Endothelial cell of umbilical vein (primary cell): ENCODE measurements at regions of chr13 and their contacts with region 1.

Region 1: DNA sequence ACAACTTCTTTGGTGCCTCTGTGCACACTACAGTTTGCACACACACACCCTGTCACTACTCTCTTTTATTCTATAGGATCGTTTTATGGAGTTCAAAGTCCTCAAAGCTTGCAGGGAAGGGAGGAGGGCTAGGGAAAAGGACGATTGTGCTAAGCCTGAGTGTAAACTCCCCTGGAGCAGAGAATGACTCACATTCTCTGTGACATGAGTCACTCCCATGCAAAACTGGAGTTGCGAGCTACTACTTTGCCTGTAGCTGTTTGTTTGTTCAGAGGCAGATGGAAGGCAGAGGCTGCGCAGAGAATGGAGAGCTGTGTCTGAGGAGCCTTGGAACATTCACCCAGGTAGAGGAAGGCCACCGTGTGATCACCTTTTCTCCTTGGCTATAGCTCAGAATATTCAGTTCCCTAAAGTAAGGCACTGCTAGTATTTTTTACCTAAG is 80.5 kb upstream of the MBNL2 start:
- DNase-seq: peak; percentile 87
- H3K4me3 ChIP-seq: no peak overlapping the region
- H3K27ac ChIP-seq: no peak overlapping the region
- H3K4me1 ChIP-seq: peaks cover 19% of the 10 kb centered on the region
- H3K27me3 ChIP-seq: no peaks in the 10 kb centered on the region
- CTCF ChIP-seq: no peak
- POLR2A ChIP-seq: no peak

Region 2: DNA sequence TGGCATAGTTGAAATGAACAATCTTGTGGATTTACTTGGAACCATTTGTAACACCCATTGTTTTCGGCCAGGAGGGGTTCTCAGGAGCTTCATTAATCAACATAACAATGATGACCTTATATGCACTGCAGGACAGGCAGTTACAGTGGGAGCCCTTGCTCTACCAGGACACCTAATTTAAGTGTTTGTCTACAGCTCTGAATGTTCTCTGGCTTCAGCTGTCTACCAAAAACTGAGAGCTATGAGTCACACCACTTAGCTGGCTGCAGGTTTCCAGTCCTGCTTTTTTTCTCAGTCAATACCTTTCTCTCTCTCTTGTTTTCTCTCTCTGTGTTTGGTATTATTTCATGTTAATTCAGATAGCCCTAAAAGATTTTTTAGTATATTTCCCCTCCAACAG is 24.8 kb before region 1 on chr13:
- CTCF ChIA-PET with region 1: interaction called, 30 read pairs
- POLR2A ChIA-PET with region 1: no interaction called
- dilution Hi-C with region 1: no loop called
- intact Hi-C with region 1: loop called (anchors 1 kb)
- DNase-seq: peak; percentile 69
- H3K4me3 ChIP-seq: no peak overlapping the region
- H3K27ac ChIP-seq: no peak overlapping the region
- H3K4me1 ChIP-seq: peaks cover 31% of the 10 kb centered on the region
- H3K27me3 ChIP-seq: no peaks in the 10 kb centered on the region
- CTCF ChIP-seq: no peak
- POLR2A ChIP-seq: no peak

Region 3: DNA sequence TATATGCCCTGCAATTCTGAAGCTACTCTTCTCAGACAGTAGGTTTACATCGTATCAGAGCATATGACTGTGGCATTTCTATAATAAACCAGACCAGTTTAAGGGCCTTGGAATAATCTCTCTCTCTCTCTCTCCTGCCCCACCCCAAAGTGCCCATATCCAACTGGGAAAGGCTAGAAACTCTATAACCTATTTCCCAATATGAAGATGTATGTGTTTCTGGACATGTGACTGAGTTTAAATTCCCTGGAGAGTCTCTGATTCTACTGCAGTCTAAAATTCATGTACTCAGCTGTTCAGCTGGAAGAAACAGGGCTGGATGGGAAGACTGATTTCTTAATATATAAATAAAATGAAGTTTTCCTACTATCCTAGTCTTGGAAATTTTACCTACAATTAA is 11.4 kb before region 1 on chr13:
- CTCF ChIA-PET with region 1: interaction called, 10 read pairs
- POLR2A ChIA-PET with region 1: no interaction called
- dilution Hi-C with region 1: no loop called
- intact Hi-C with region 1: no loop called
- DNase-seq: no peak
- H3K4me3 ChIP-seq: no peak overlapping the region
- H3K27ac ChIP-seq: no peak overlapping the region
- H3K4me1 ChIP-seq: no peaks in the 10 kb centered on the region
- H3K27me3 ChIP-seq: peaks cover 6 to 9% of the 10 kb centered on the region in 2 experiments
- CTCF ChIP-seq: no peak
- POLR2A ChIP-seq: no peak

Region 4: DNA sequence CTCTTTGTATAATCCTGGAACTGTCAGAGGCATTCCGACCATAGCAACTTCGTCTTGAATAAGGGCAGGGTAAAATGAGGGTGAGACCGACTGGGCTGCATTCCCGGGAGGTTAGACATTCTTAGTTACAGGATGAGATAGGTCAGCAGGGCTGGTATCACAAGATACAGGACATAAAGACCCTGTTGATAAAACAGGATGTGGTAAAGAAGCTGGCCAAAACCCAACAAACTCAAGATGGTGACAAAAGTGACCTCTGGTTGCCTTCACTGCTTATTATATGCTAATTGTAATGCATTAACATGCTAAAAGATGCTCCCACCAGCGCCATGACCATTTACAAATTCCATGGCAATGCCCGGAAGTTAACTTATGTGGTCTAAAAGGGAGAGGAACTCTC is 52.9 kb after region 1 on chr13:
- CTCF ChIA-PET with region 1: interaction called, 4 read pairs
- POLR2A ChIA-PET with region 1: no interaction called
- dilution Hi-C with region 1: no loop called
- intact Hi-C with region 1: loop called (anchors 2 kb)
- DNase-seq: peak; percentile 90
- H3K4me3 ChIP-seq: no peak overlapping the region
- H3K27ac ChIP-seq: peak overlapping the region; percentile 28
- H3K4me1 ChIP-seq: peaks cover 26% of the 10 kb centered on the region
- H3K27me3 ChIP-seq: no peaks in the 10 kb centered on the region
- CTCF ChIP-seq: no peak
- POLR2A ChIP-seq: no peak

Region 5: GRCh38 chr13:97212601-97213040 is 71.0 kb after region 1 on chr13:
- CTCF ChIA-PET with region 1: interaction called, 14 read pairs
- POLR2A ChIA-PET with region 1: no interaction called
- dilution Hi-C with region 1: no loop called
- intact Hi-C with region 1: no loop called
- DNase-seq: peak; percentile 56
- H3K4me3 ChIP-seq: no peak overlapping the region
- H3K27ac ChIP-seq: no peak overlapping the region
- H3K4me1 ChIP-seq: no peaks in the 10 kb centered on the region
- H3K27me3 ChIP-seq: no peaks in the 10 kb centered on the region
- CTCF ChIP-seq: peak; percentile 52 to 72
- POLR2A ChIP-seq: no peak

Region 6: DNA sequence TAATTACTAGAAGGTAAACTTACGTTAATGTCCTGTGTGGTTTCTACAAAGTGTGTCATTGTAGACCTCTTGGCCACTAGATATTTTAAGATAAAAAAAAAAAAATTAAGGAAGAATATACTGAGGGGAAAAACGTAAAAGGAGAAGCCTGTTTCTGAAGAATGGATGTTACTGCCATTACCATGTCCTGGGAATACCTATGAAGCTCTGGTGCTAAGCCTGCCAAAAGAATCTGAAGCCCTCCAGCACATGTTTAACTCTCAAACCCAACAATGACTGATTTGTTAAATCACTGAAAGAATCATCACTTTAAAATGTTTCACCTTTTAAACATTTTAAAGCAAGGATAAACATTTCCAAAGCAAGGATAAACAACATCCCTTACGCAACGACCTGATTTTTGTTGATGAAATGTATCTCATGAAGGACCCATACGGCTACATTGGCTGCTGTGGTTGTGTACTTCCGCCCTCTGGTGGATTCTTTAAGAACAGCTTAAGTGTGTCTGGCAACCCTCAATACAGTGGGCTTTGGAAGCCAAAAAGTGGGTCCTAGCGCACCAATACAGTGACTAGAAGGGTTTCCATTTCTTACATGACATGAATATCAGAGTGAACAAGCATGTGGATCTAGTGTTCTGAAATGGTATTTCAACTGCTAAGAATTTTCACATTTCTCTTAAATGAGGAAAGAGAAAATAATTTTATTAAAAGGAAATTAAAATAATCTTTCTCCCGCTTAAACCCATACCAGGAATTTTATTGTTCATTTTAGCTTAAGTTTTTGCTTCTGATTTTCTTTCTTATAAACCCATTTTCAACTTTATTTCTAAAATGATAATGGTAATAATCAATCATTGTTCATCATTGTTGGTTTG is 217.8 kb after region 1 on chr13:
- CTCF ChIA-PET with region 1: interaction called, 10 read pairs
- POLR2A ChIA-PET with region 1: no interaction called
- dilution Hi-C with region 1: no loop called
- intact Hi-C with region 1: no loop called
- DNase-seq: peak; percentile 81
- H3K4me3 ChIP-seq: no peak overlapping the region
- H3K27ac ChIP-seq: peak overlapping the region; percentile 20
- H3K4me1 ChIP-seq: no peaks in the 10 kb centered on the region
- H3K27me3 ChIP-seq: no peaks in the 10 kb centered on the region
- CTCF ChIP-seq: peak; percentile 66 to 80
- POLR2A ChIP-seq: no peak